Panc1 (cell line): ENCODE measurements at regions of chr3 and their contacts with region 1.

Region 1: DNA sequence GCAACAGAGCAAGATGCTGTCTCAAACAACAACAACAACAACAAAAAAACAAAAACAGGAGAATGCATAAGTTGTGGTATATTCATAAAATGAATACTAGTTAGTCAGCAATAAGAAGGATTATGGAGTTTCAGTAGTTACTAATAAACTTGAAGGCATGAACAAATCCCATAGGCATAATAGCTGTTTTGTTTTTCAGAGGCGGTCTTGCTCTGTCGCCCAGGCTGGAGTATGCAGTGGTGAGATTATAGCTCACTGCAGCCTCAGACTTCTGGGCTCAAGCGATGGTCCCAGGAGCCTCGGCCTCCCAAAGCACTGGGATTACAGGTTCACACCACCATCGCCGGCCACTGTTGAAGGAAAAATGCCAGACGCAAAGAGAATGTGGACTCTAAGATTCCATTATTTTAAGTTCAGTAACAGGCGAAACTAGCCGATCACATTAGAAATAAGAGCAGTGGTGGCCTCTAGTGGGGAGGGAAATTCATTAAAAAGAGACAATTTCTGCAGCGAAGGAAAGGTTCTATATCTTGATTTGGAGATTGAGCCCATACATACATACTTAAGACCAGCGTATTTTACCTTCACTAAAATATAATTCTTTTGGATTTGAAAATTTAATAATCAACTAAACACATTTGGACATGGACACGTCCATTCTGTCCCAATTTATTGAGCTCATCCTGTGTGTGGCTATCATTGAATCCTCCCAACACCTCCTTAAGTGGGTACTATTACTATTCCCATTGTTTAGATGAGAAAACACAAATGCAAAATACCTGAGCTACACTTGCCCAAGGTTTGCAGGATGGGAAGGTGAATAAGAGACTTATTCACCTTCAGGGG is 27.4 kb upstream of the HDAC11 start:
- DNase-seq: peak; percentile 51
- ATAC-seq: peak; percentile 57
- H3K4me3 ChIP-seq: peak overlapping the region; percentile 56 to 69
- H3K27ac ChIP-seq: no peak overlapping the region; the same call in 1 of the 2 replicates
- H3K4me1 ChIP-seq: no peaks in the 10 kb centered on the region
- H3K27me3 ChIP-seq: no peaks in the 10 kb centered on the region
- CTCF ChIP-seq: peak; percentile 72

Region 2: GRCh38 chr3:13091898-13092611 is 360.7 kb before region 1 on chr3:
- CTCF ChIA-PET with region 1: interaction called, 16 read pairs
- POLR2A ChIA-PET with region 1: interaction called, 9 read pairs
- in situ Hi-C with region 1: no loop called
- intact Hi-C with region 1: loop called (anchors 5 kb)
- DNase-seq: peak; percentile 64
- ATAC-seq: peak; percentile 87
- H3K4me3 ChIP-seq: no peak overlapping the region
- H3K27ac ChIP-seq: peak overlapping the region; percentile 13; the same call in 1 of the 2 replicates
- H3K4me1 ChIP-seq: peaks cover 17% of the 10 kb centered on the region
- H3K27me3 ChIP-seq: no peaks in the 10 kb centered on the region
- CTCF ChIP-seq: peak; percentile 92

Region 3: GRCh38 chr3:13296662-13297061 is 156.1 kb before region 1 on chr3:
- CTCF ChIA-PET with region 1: no interaction called
- POLR2A ChIA-PET with region 1: no interaction called
- in situ Hi-C with region 1: no loop called
- intact Hi-C with region 1: loop called (anchors 10 kb)
- DNase-seq: no peak
- ATAC-seq: no peak
- H3K4me3 ChIP-seq: no peak overlapping the region
- H3K27ac ChIP-seq: no peak overlapping the region
- H3K4me1 ChIP-seq: no peaks in the 10 kb centered on the region
- H3K27me3 ChIP-seq: no peaks in the 10 kb centered on the region
- CTCF ChIP-seq: no peak

Region 4: GRCh38 chr3:13480340-13481318 is 27.9 kb after region 1 on chr3:
- CTCF ChIA-PET with region 1: interaction called, 18 read pairs
- POLR2A ChIA-PET with region 1: interaction called, 3 read pairs
- in situ Hi-C with region 1: no loop called
- intact Hi-C with region 1: no loop called
- DNase-seq: no peak
- ATAC-seq: peak; percentile 57
- H3K4me3 ChIP-seq: peak overlapping the region; percentile 52 to 61
- H3K27ac ChIP-seq: no peak overlapping the region
- H3K4me1 ChIP-seq: no peaks in the 10 kb centered on the region
- H3K27me3 ChIP-seq: no peaks in the 10 kb centered on the region
- CTCF ChIP-seq: no peak

Region 5: DNA sequence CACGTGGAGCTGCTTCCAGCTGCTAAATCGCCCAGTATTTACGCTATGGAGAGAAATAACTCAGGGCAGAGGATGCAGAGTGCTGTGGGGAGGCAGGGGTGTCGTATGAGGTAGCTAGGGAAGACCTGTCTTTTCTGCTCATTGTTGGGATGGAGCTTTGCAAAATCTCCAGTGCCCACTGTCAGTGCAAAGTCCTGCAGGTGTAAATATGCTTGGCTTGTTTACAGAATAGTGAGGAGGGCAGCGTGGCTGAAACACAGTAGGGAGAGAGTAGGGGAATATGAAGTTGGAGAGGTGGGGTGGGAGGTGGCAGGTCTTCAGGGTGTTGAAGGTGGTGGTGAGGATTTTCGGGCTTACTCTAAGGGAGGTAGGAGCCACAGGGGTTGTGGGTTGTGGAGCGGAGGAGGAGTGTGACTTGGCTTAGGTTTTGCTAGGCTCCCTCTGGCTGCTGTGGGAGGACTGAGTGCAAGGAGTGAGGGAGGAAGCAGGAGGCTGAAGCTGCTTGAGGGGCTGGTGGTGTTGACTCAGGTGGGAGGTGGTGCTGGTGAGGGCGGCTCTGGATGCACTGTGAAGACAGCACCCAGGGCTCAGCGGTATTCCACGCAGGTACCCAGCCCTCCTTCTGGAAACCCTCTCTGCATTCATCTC is 221.9 kb after region 1 on chr3:
- CTCF ChIA-PET with region 1: no interaction called
- POLR2A ChIA-PET with region 1: no interaction called
- in situ Hi-C with region 1: no loop called
- intact Hi-C with region 1: no loop called
- DNase-seq: no peak
- ATAC-seq: no peak
- H3K4me3 ChIP-seq: no peak overlapping the region
- H3K27ac ChIP-seq: no peak overlapping the region
- H3K4me1 ChIP-seq: no peaks in the 10 kb centered on the region
- H3K27me3 ChIP-seq: peaks cover 2% of the 10 kb centered on the region; the same call in 1 of the 2 replicates
- CTCF ChIP-seq: no peak